ENCODE measurements at regions of chr2 and their contacts with region 1.

Region 1: GRCh38 chr2:74147727-74148456 is at the start of gene BOLA3:
- DNase-seq: peak; percentile 60 to 89 (median 76)
- ATAC-seq: peak; percentile 87
- H3K4me3 ChIP-seq: peak within 1 kb of the TSS; percentile 62
- H3K4me3 Mint-ChIP-seq: no peak within 1 kb of the TSS
- H3K27ac ChIP-seq: peak within 1 kb of the TSS; percentile 29 to 65
- H3K27ac Mint-ChIP-seq: no peak within 1 kb of the TSS
- H3K4me1 ChIP-seq: peaks cover 23% of the 10 kb centered on the region
- H3K4me1 Mint-ChIP-seq: no peaks in the 10 kb centered on the region
- H3K27me3 ChIP-seq: no peaks in the 10 kb centered on the region
- H3K27me3 Mint-ChIP-seq: no peaks in the 10 kb centered on the region
- CTCF ChIP-seq: peak; percentile 77
- total RNA-seq, gene BOLA3: 11.4 to 12.9 TPM

Region 2: DNA sequence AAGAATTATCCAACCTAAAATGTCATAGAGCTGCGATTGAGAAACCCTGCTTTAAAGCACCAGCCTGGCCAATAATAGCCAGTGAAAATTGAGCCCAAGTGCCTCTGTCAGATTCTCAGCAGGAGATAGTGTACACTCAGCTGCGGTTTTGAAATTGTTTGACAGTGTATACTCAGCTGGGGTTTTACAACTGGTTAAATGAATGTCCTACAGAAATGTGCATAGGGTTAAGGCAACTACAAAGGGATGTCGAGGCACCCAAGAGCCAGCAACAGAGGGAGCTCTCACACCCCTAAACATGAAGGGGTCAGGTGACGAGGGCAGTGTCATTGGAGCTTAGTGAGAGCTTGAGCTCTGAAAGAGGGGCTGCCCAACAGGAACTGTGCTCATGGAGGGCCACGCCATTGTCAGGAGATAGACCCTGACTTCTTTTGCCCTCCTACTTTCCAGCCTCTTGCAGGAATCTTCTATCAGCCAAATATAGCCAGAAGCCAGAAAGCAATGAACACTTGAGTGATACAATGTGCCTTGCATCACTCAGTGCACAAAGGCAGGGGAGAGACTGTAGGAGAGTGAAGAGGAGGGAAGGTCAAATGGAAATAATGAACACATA is 239.9 kb before region 1 on chr2:
- CTCF ChIA-PET with region 1: interaction called, 6 read pairs
- POLR2A ChIA-PET with region 1: no interaction called
- intact Hi-C with region 1: loop called (anchors 2 to 5 kb)
- DNase-seq: peak; percentile 30 to 79 (median 47)
- ATAC-seq: peak; percentile 82
- H3K4me3 ChIP-seq: no peak overlapping the region
- H3K4me3 Mint-ChIP-seq: no peak overlapping the region
- H3K27ac ChIP-seq: no peak overlapping the region
- H3K27ac Mint-ChIP-seq: no peak overlapping the region
- H3K4me1 ChIP-seq: no peaks in the 10 kb centered on the region
- H3K4me1 Mint-ChIP-seq: no peaks in the 10 kb centered on the region
- H3K27me3 ChIP-seq: no peaks in the 10 kb centered on the region
- H3K27me3 Mint-ChIP-seq: no peaks in the 10 kb centered on the region
- CTCF ChIP-seq: peak; percentile 61

Region 3: DNA sequence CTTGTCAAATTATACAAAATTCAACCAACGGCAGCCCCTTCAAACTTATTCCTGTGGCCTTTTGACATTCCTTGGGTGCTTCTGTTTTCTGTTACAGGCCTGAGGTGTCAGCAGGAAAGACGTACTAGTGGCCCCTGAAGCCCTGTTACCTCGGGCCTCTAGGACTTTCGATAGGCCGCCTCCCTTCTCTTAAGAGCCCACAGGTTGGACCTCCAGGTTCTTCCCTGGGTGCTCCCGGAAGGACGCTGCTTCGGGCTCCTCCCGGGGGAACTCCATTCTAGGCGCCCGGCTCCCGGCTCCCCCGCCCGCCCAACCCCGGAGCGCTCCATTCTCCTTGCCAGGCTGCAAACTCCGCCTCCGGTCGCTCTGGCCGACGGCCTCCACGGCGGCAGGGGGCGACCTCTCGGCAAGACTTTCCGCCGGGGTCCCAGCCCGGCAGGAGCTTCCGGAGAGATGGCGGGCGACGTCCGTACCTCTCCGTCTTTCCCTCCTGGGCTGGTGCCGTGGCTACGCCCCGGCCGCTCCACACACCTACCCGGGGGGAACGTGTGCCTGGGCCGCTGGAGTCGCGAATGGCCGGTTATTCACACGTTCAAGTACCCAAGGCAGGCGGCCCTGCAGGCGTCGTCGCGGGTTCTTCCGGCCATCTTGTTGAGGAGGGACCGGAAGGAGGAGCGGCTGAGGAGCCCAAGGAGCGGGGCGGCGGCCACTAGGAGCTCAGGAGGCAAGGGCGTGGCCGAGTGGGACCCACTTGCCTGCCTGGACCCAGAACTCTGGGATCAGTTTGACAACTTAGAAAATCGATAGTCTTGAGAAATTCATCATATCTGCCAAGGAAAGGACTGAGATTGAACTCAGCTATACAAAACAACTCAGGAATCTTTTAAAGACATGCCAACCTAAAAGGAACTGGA is 27.7 kb before region 1 on chr2:
- CTCF ChIA-PET with region 1: interaction called, 14 read pairs
- POLR2A ChIA-PET with region 1: interaction called, 23 read pairs
- intact Hi-C with region 1: no loop called
- DNase-seq: peak; percentile 66 to 92 (median 82)
- ATAC-seq: peak; percentile 95
- H3K4me3 ChIP-seq: peak overlapping the region; percentile 86
- H3K4me3 Mint-ChIP-seq: peak overlapping the region; percentile 90
- H3K27ac ChIP-seq: peak overlapping the region; percentile 81 to 94
- H3K27ac Mint-ChIP-seq: peak overlapping the region; percentile 88
- H3K4me1 ChIP-seq: peaks cover 10% of the 10 kb centered on the region
- H3K4me1 Mint-ChIP-seq: peaks cover 11% of the 10 kb centered on the region
- H3K27me3 ChIP-seq: no peaks in the 10 kb centered on the region
- H3K27me3 Mint-ChIP-seq: no peaks in the 10 kb centered on the region
- CTCF ChIP-seq: peak; percentile 63